Posterior vena cava (tissue), 2 donors: ENCODE measurements at regions of chr11 and their contacts with region 1.

Region 1: GRCh38 chr11:102287964-102288724 is 29.1 kb upstream of the BIRC3 start:
- DNase-seq: no peak

Region 2: DNA sequence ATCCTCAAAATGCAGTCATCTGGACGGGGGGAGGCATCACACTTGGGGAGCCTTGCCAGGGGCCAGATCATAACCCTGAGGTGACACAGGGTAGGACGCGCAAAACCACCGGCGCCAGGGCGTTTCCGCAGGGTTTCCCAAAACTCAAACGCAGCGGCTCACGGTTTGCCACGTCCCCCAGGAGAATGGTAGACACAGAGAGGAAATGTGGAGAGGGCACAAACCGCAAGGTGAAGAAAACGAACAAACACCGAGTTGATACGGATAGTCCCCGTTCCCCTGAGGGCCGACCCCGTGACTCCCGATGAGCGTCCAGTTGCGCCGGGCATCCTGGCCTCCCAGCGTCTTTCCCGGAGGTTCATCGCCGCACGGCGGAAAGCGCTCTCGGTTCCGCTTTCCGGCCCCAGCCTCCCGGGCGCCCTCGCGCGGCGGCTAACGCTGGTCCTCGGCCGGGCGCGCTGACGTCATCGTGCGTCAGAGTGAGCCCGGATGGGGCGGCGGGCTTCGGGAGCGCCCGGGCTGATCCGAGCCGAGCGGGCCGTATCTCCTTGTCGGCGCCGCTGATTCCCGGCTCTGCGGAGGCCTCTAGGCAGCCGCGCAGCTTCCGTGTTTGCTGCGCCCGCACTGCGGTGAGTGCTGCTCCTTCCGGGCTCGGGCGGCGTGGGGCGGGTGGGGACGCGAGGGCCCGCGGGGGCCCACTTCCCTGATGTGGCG is 58.8 kb after region 1 on chr11 and contains the start of gene BIRC2:
- intact Hi-C with region 1: loop called in 1 of 2 experiments (anchors 10 kb)
- DNase-seq: peak; percentile 98
- total RNA-seq, gene BIRC2: 36.5 to 44.9 TPM